ENCODE measurements at regions of chr16 and their contacts with region 1.

Region 1: DNA sequence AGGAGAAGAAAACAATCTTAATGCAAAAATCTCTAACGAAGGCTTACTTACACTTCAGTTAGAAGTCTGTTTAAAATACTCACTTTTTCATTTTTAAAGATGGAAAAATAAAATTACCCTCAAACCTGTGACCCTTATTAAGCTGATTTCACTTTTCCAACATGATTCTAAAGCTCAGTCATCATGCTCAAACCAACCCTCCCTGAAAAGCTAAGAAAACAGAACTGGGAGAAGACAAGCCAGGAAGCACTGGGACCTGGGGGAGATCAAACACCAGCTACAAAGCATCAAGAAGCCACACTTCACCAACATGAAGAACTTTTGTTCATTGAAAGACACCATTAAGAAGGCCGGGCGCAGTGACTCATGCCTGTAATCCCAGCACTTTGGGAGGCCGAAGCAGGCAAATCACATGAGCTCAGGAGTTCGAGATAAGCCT is 88.8 kb downstream of the LITAF start:
- DNase-seq: peak; percentile 44
- H3K4me3 ChIP-seq: no peak overlapping the region
- H3K27ac ChIP-seq: peak overlapping the region; percentile 52
- H3K4me1 ChIP-seq: peaks cover 35% of the 10 kb centered on the region
- H3K27me3 ChIP-seq: no peaks in the 10 kb centered on the region
- CTCF ChIP-seq: no peak
- POLR2A ChIP-seq: no peak

Region 2: DNA sequence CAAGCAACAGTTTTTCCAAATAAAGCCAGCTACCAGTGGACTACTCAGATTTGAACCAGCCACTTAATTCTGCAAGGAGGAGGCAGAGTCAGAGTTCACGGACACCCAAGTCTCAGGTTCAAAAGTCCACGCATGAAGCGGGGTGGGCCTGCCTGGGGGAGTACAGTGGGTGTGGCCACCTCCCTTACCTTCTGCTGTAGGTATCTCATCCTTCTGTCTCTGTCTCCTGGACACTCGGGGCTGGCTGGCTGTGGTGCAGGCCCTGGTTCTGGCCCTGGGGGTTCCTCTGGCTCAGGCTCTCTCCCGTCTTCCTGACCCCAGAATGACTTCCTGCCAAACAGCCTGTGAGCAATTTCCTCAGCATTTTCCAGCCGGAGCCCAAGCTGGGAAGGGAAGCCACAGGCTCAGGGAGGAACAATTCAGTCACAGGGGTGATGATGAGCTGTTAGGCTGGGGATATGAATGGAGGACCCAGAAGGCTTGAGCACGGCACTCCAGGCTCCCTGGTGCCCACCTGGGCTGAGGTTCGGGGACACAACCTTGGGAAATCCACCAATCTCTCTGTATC is 13.1 kb before region 1 on chr16:
- CTCF ChIA-PET with region 1: interaction called, 5 read pairs
- POLR2A ChIA-PET with region 1: no interaction called
- dilution Hi-C with region 1: no loop called
- intact Hi-C with region 1: loop called (anchors 1 kb)
- DNase-seq: peak; percentile 91
- H3K4me3 ChIP-seq: no peak overlapping the region
- H3K27ac ChIP-seq: peak overlapping the region; percentile 47
- H3K4me1 ChIP-seq: peaks cover 22% of the 10 kb centered on the region
- H3K27me3 ChIP-seq: no peaks in the 10 kb centered on the region
- CTCF ChIP-seq: no peak
- POLR2A ChIP-seq: no peak

Region 3: DNA sequence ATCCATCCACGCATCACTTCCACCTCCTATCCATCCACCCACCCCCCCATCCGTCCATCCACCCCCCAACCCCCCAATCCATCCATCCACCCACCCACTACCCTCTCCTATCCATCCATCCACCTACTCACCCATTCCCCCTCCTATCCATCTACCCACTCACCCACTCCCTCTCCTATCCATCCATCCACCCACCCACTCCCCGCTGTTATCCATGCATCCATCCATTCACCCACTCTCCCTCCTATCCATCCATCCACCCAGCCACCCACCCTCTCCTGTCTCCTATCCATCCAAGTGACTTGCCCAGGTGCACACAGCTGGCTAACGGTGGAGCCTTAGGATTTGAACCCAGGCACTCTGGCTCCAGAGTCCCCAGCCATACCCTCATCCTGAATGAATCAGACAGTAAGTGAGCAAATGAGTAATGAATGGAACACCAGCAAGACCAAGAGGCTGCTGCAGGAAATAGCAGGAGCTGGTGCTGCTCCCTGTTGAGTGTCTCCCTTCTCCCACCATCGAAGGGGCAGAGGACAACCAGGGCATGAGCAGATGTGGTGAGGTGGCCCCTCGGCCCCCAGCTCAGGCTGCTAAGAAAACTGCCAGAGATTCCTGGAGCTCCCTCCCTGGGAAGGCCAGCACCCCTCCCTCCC is 26.4 kb after region 1 on chr16:
- CTCF ChIA-PET with region 1: no interaction called
- POLR2A ChIA-PET with region 1: no interaction called
- dilution Hi-C with region 1: no loop called
- intact Hi-C with region 1: no loop called
- DNase-seq: no peak
- H3K4me3 ChIP-seq: no peak overlapping the region
- H3K27ac ChIP-seq: no peak overlapping the region
- H3K4me1 ChIP-seq: no peaks in the 10 kb centered on the region
- H3K27me3 ChIP-seq: peaks cover 3 to 5% of the 10 kb centered on the region in 2 experiments
- CTCF ChIP-seq: no peak
- POLR2A ChIP-seq: no peak

Region 4: DNA sequence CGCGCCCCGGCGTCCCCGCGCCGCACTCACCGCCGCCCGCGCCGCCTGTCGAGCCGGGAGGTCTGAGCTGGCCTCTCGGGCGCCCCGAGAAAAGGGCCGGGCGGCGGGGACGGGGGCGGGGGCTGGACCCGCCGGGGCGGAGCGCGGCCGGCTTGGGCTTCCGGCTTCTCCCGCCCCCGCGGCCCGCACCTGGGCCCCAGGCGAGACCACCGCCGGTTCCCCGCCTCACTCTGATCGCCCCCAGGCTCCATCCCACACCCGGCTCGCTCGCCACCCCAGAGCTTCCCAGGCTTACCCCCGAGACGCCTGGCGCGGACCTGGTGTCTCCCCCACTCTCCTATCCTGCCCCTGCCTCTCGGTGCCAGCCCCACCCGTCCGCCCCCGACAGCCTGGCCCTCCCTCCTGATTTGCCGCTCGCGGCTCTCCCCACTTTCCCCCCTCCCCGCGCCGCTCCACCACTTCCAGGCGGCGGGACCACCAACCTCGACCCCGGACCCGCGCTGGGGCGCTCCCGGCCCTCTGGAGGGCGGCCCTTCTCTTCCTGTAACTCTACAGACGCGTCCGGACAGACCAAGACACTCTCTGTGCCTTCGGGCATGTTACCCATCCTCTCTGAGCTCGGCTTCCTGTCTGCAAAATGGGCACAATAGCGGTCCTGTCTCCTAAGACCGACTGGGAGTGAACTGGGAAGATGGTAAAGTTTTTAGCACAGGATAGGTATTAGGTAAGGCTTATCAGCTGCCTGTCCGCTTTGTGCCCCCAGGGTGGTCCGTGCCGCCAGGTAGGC is 89.2 kb after region 1 on chr16 and contains the start of gene LITAF:
- CTCF ChIA-PET with region 1: no interaction called
- POLR2A ChIA-PET with region 1: no interaction called
- dilution Hi-C with region 1: no loop called
- intact Hi-C with region 1: loop called (anchors 5 kb)
- DNase-seq: no peak
- H3K4me3 ChIP-seq: peak within 1 kb of the TSS; percentile 50 to 74 (median 60)
- H3K27ac ChIP-seq: no peak within 1 kb of the TSS
- H3K4me1 ChIP-seq: peaks cover 5% of the 10 kb centered on the region
- H3K27me3 ChIP-seq: peaks cover 5 to 13% of the 10 kb centered on the region in 2 experiments
- CTCF ChIP-seq: no peak
- POLR2A ChIP-seq: no peak
- total RNA-seq, gene LITAF: 15.2 and 17.4 TPM in 2 replicates